Activated B cell treated with CpG ODN at 0.5 μM for 24 hours (primary cell): ENCODE measurements at regions of chr13 and their contacts with region 1.

Region 1: GRCh38 chr13:99356158-99357091 is 49.2 kb upstream of the GPR183 start:
- DNase-seq: peak; percentile 40
- ATAC-seq: peak; percentile 49
- H3K4me3 Mint-ChIP-seq: peak overlapping the region; percentile 70
- H3K27ac Mint-ChIP-seq: peak overlapping the region; percentile 94
- H3K4me1 Mint-ChIP-seq: peaks cover 97% of the 10 kb centered on the region
- H3K27me3 Mint-ChIP-seq: no peaks in the 10 kb centered on the region
- CTCF ChIP-seq: no peak

Region 2: DNA sequence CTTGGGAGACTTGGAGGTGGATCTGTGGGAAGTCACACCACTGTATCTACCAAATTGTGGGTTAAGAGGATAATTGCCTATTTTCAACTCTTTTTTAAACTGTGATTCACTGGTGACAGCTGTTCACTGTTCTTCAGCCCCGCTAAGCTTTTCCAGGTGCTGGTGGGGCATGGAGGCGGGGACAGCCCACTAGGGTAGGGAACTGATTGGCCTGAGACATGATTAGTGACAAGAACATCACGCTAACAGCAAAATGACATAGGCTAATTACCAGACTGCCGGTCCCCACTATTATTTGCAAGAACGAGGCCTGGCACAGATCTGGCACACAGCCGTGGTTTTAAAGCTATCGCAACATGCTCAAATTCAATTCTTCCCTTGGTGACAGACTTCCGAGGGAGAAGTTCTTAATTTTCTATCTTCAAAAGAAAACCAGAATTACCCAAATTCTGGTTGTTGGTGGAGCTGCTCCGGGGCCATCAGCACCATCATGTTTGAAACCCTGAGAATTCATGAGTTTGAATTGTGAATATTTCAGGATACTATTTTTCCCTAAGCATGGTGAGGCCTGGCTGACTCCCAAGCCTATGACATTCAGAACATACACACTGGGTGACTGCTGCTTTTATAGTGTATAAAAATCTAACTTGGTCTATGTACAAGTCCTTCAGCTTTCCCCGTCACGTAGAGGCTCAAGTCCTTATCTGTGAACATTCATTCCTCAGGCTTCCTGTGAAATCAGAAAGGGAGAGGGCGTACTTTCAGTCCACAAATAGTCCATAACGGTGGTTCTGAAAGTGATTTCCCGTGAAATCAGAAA is 396.4 kb before region 1 on chr13:
- CTCF ChIA-PET with region 1: no interaction called
- POLR2A ChIA-PET with region 1: no interaction called
- intact Hi-C with region 1: no loop called
- DNase-seq: no peak
- ATAC-seq: no peak
- H3K4me3 Mint-ChIP-seq: no peak overlapping the region
- H3K27ac Mint-ChIP-seq: no peak overlapping the region
- H3K4me1 Mint-ChIP-seq: no peaks in the 10 kb centered on the region
- H3K27me3 Mint-ChIP-seq: no peaks in the 10 kb centered on the region
- CTCF ChIP-seq: no peak

Region 3: GRCh38 chr13:99322297-99323103 is 33.9 kb before region 1 on chr13:
- CTCF ChIA-PET with region 1: no interaction called
- POLR2A ChIA-PET with region 1: interaction called, 7 read pairs
- intact Hi-C with region 1: loop called (anchors 1 kb)
- DNase-seq: no peak
- ATAC-seq: peak; percentile 87
- H3K4me3 Mint-ChIP-seq: peak overlapping the region; percentile 56
- H3K27ac Mint-ChIP-seq: peak overlapping the region; percentile 91
- H3K4me1 Mint-ChIP-seq: peaks cover 66% of the 10 kb centered on the region
- H3K27me3 Mint-ChIP-seq: no peaks in the 10 kb centered on the region
- CTCF ChIP-seq: no peak

Region 4: DNA sequence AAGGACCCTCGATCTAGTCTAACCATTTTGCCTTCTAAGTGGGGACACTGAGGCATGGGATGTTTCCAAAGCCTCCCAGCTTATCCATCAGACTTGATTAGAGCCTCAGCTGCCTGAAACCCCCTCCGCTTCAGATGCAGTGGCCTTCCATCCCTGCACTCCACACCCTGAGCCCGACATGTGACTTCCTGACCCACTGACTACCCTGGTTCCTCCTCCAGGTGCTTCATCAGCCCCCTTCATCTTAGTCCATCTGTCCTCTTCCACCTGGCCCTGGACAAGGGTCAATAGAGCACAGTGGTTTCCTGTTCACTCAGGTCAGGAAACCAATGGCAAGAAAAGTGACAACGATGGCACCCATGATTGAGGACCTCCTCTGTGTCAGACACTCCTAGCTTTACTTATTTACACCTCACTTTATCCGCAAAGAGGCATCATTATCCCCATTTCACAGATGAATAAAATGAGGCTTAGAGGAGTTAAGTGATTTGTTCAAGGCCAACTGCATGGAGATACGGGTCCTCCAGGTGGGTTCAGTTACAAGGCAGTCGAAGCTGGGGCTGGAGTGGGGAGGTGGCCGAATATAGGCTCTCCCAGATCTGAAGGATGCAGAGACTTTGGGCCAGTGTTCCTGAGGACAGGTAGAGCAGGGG is 63.3 kb after region 1 on chr13:
- CTCF ChIA-PET with region 1: no interaction called
- POLR2A ChIA-PET with region 1: interaction called, 3 read pairs
- intact Hi-C with region 1: loop called (anchors 1 kb)
- DNase-seq: no peak
- ATAC-seq: no peak
- H3K4me3 Mint-ChIP-seq: peak overlapping the region; percentile 80
- H3K27ac Mint-ChIP-seq: peak overlapping the region; percentile 96
- H3K4me1 Mint-ChIP-seq: peaks cover 72% of the 10 kb centered on the region
- H3K27me3 Mint-ChIP-seq: no peaks in the 10 kb centered on the region
- CTCF ChIP-seq: no peak

Region 5: GRCh38 chr13:99656092-99656745 is 299.8 kb after region 1 on chr13:
- CTCF ChIA-PET with region 1: no interaction called
- POLR2A ChIA-PET with region 1: no interaction called
- intact Hi-C with region 1: no loop called
- DNase-seq: peak; percentile 54
- ATAC-seq: peak; percentile 85
- H3K4me3 Mint-ChIP-seq: peak overlapping the region; percentile 11
- H3K27ac Mint-ChIP-seq: no peak overlapping the region
- H3K4me1 Mint-ChIP-seq: peaks cover 24% of the 10 kb centered on the region
- H3K27me3 Mint-ChIP-seq: peaks cover 3% of the 10 kb centered on the region
- CTCF ChIP-seq: no peak